ENCODE measurements at regions of chr11 and their contacts with region 1.

Region 1: GRCh38 chr11:777288-778255 is at the start of gene GATD1:
- DNase-seq: peak; percentile 94
- ATAC-seq: peak; percentile 90
- H3K4me3 Mint-ChIP-seq: peak within 1 kb of the TSS; percentile 89
- H3K27ac Mint-ChIP-seq: peak within 1 kb of the TSS; percentile 75
- H3K4me1 Mint-ChIP-seq: peaks cover 25% of the 10 kb centered on the region
- H3K27me3 Mint-ChIP-seq: no peaks in the 10 kb centered on the region
- CTCF ChIP-seq: no peak
- total RNA-seq, gene GATD1: 45.8 to 48.8 TPM

Region 2: GRCh38 chr11:747158-748006 is 30.2 kb before region 1 on chr11 and contains the start of gene TALDO1:
- CTCF ChIA-PET with region 1: no interaction called
- POLR2A ChIA-PET with region 1: interaction called, 14 read pairs
- intact Hi-C with region 1: no loop called
- DNase-seq: peak; percentile 89
- ATAC-seq: peak; percentile 95
- H3K4me3 Mint-ChIP-seq: peak within 1 kb of the TSS; percentile 87
- H3K27ac Mint-ChIP-seq: peak within 1 kb of the TSS; percentile 77
- H3K4me1 Mint-ChIP-seq: peaks cover 14% of the 10 kb centered on the region
- H3K27me3 Mint-ChIP-seq: no peaks in the 10 kb centered on the region
- CTCF ChIP-seq: peak; percentile 11
- total RNA-seq, gene TALDO1: 234 to 241 TPM

Region 3: DNA sequence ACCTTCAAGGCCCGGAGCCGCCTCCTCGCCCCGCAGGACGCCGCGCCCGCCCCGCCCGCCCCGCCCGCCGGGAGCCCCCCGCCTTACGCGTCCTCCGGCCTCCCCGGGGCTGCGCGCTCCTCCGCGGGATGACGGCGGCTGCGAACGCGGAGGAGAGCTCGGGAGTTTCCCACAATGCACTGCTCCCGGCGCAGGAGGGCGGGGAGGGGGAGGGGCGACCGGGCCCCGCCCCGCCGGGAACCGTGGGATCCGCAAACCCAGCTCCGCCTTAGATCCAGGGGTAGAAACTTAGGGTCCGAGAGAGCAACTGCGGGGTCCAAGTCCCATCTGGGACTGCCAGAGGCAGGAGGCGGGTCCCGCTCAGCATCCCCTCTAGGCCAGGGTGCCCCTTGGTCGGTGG is 12.4 kb after region 1 on chr11 and contains the start of gene CEND1:
- CTCF ChIA-PET with region 1: interaction called, 3 read pairs
- POLR2A ChIA-PET with region 1: interaction called, 21 read pairs
- intact Hi-C with region 1: no loop called
- DNase-seq: peak; percentile 50
- ATAC-seq: peak; percentile 64
- H3K4me3 Mint-ChIP-seq: no peak within 1 kb of the TSS
- H3K27ac Mint-ChIP-seq: no peak within 1 kb of the TSS
- H3K4me1 Mint-ChIP-seq: peaks cover 10% of the 10 kb centered on the region
- H3K27me3 Mint-ChIP-seq: no peaks in the 10 kb centered on the region
- CTCF ChIP-seq: no peak
- total RNA-seq, gene CEND1: 0.20 to 0.25 TPM